GM12878 (cell line): ENCODE measurements at regions of chr2 and their contacts with region 1.

Region 1: DNA sequence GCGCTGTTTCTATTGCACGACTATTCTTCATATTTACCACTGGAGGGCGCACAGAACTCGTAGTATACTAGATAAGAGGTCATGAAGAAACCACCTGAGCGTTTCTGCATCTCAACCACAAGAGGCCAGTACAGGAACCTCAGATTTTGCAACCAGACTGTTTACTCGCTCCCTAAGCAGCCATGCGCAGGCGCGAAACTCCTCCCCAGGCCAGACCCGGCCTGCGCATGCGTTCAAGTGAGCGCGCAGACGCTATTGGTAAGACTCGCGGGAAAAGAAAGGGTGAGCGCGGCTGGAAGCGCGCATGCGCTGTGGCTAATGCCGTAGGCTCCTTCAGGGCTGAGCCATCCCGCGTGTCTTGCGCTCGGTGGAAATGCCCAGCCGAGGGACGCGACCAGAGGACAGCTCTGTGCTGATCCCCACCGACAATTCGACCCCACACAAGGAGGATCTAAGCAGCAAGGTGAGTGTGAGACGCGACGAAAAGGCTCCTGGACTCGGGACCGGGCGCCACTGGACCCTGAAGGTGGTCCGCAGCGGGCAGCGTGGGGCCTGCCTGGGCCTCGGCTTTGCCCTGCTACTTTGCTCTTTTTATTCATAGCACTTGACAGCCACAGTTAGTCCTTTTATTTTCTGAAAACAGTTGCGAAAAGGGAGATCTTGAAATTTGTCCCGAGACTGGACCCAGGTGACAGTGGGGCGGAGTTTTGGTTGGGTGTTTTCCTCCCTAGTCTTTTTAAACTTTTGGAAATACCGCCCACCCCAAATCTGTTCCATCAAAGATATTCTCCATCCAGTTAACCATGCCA is at the start of gene ASNSD1:
- DNase-seq: peak; percentile 99
- ATAC-seq: peak; percentile 91
- H3K4me3 ChIP-seq: peak within 1 kb of the TSS; percentile 82
- H3K27ac ChIP-seq: peak within 1 kb of the TSS; percentile 93
- H3K4me1 ChIP-seq: peaks cover 13% of the 10 kb centered on the region; the same call in 1 of the 2 replicates
- H3K27me3 ChIP-seq: no peaks in the 10 kb centered on the region
- CTCF ChIP-seq: peak; percentile 76 to 99 (median 97)
- EP300 ChIP-seq: no peak
- POLR2A ChIP-seq: peak; percentile 99
- RAD21 ChIP-seq: peak; percentile 93
- polyA plus RNA-seq, gene ASNSD1: 70.1 to 74.1 TPM

Region 2: GRCh38 chr2:189674374-189675112 is 13.2 kb after region 1 on chr2 and contains the start of gene ANKAR:
- CTCF ChIA-PET with region 1: interaction called, 163 read pairs
- POLR2A ChIA-PET with region 1: interaction called, 11 read pairs
- RAD21 ChIA-PET with region 1: interaction called, 9 read pairs
- SMC1A ChIA-PET with region 1: interaction called, 71 read pairs
- in situ Hi-C with region 1: no loop called
- intact Hi-C with region 1: loop called (anchors 1 kb)
- DNase-seq: peak; percentile 36
- ATAC-seq: peak; percentile 98
- H3K4me3 ChIP-seq: peak within 1 kb of the TSS; percentile 76
- H3K27ac ChIP-seq: peak within 1 kb of the TSS; percentile 93
- H3K4me1 ChIP-seq: peaks cover 3% of the 10 kb centered on the region; the same call in 1 of the 2 replicates
- H3K27me3 ChIP-seq: no peaks in the 10 kb centered on the region
- CTCF ChIP-seq: peak; percentile 76 to 80 (median 76); a peak in 5 of 6 replicates
- EP300 ChIP-seq: no peak
- POLR2A ChIP-seq: peak; percentile 84
- RAD21 ChIP-seq: peak; percentile 40; the same call in 1 of the 2 replicates
- polyA plus RNA-seq, gene ANKAR: 1.3 to 2.9 TPM

Region 3: GRCh38 chr2:189762551-189763298 is 101.4 kb after region 1 on chr2 and contains the start of gene OSGEPL1:
- CTCF ChIA-PET with region 1: interaction called, 72 read pairs
- POLR2A ChIA-PET with region 1: interaction called, 5 read pairs
- RAD21 ChIA-PET with region 1: interaction called, 9 read pairs
- SMC1A ChIA-PET with region 1: interaction called, 9 read pairs
- in situ Hi-C with region 1: no loop called
- intact Hi-C with region 1: loop called (anchors 2 kb)
- DNase-seq: peak; percentile 87
- ATAC-seq: peak; percentile 97
- H3K4me3 ChIP-seq: peak within 1 kb of the TSS; percentile 97
- H3K27ac ChIP-seq: peak within 1 kb of the TSS; percentile 91
- H3K4me1 ChIP-seq: peaks cover 5% of the 10 kb centered on the region; the same call in 1 of the 2 replicates
- H3K27me3 ChIP-seq: no peaks in the 10 kb centered on the region
- CTCF ChIP-seq: peak; percentile 50 to 60 (median 53); a peak in 5 of 6 replicates
- EP300 ChIP-seq: no peak
- POLR2A ChIP-seq: peak; percentile 91
- RAD21 ChIP-seq: peak; percentile 16; the same call in 1 of the 2 replicates
- polyA plus RNA-seq, gene OSGEPL1: 9.4 to 11.5 TPM

Region 4: GRCh38 chr2:189798312-189799029 is 137.1 kb after region 1 on chr2:
- CTCF ChIA-PET with region 1: interaction called, 11 read pairs
- POLR2A ChIA-PET with region 1: no interaction called
- RAD21 ChIA-PET with region 1: interaction called, 10 read pairs
- SMC1A ChIA-PET with region 1: interaction called, 3 read pairs
- in situ Hi-C with region 1: no loop called
- intact Hi-C with region 1: no loop called
- DNase-seq: peak; percentile 25
- ATAC-seq: peak; percentile 96
- H3K4me3 ChIP-seq: no peak overlapping the region
- H3K27ac ChIP-seq: no peak overlapping the region
- H3K4me1 ChIP-seq: no peaks in the 10 kb centered on the region
- H3K27me3 ChIP-seq: no peaks in the 10 kb centered on the region
- CTCF ChIP-seq: peak; percentile 34 to 60 (median 48); a peak in 5 of 6 replicates
- EP300 ChIP-seq: no peak
- POLR2A ChIP-seq: no peak
- RAD21 ChIP-seq: peak; percentile 77

Region 5: DNA sequence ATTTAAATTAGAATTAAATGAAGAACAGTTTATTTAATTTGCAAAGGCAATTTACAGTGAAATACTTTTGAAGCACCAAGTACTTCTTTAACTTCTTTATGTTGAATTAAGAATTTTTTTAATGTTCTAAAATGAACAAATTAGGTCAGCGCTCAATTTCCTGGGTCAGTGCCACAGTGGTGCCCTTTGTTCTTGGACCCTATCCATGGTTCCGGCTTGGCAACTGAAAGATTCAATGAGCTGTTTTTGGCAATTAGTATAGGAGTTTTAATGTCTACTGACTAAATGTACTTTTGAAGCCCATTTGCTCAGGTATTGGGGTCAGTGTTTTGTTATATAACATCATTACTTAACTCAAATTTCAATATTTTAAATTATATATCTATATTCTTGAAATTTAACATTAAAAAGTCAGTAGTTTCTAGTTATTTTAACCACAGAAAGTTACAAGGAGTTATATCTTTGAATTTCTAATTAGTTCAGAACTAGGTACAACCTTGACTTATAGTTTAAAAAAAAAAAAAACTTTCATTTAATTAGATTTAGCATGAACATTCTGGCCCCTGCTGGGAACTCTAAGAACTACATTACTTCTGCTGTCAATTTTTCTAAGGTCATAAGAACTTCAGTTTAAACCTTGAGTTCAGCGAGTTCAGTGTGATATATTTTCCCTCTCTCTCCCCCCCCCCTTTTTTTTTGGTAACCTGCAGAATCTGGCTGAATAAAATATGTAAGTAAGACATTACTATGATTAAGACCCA is 408.8 kb after region 1 on chr2:
- CTCF ChIA-PET with region 1: interaction called, 7 read pairs
- POLR2A ChIA-PET with region 1: no interaction called
- RAD21 ChIA-PET with region 1: interaction called, 14 read pairs
- SMC1A ChIA-PET with region 1: interaction called, 19 read pairs
- in situ Hi-C with region 1: no loop called
- intact Hi-C with region 1: loop called (anchors 1 kb)
- DNase-seq: no peak
- ATAC-seq: peak; percentile 70
- H3K4me3 ChIP-seq: no peak overlapping the region
- H3K27ac ChIP-seq: no peak overlapping the region
- H3K4me1 ChIP-seq: no peaks in the 10 kb centered on the region
- H3K27me3 ChIP-seq: no peaks in the 10 kb centered on the region
- CTCF ChIP-seq: peak; percentile 53 to 74 (median 55)
- EP300 ChIP-seq: no peak
- POLR2A ChIP-seq: no peak
- RAD21 ChIP-seq: peak; percentile 93